WTC11 (cell line): ENCODE measurements at regions of chr12 and their contacts with region 1.

Region 1: DNA sequence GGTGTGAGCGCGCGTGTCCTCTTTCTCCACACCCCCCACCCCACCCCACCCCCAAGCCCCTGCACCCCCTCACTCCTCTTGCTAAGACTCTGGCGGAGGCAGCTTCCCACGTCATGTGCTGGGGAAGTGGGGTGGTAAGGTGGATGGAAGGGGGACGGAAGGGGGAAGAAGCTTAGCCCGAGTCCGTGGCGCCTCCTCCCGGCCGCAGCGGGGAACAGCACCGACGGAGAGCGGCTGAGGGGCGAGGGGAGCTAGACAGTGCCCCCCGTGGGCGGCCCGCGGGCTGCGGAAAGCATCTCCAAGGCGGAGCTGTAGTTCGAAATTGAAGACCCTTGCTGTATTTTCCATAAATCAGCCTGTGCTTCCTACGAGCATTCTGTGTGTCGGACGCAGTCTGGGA is 588 bp upstream of the GRIN2B start:
- DNase-seq: peak; percentile 92
- ATAC-seq: peak; percentile 84
- H3K4me3 Mint-ChIP-seq: peak overlapping the region; percentile 92
- H3K27ac Mint-ChIP-seq: no peak overlapping the region
- H3K4me1 Mint-ChIP-seq: peaks cover 17% of the 10 kb centered on the region
- H3K27me3 Mint-ChIP-seq: peaks cover 74% of the 10 kb centered on the region
- CTCF ChIP-seq: peak; percentile 88

Region 2: DNA sequence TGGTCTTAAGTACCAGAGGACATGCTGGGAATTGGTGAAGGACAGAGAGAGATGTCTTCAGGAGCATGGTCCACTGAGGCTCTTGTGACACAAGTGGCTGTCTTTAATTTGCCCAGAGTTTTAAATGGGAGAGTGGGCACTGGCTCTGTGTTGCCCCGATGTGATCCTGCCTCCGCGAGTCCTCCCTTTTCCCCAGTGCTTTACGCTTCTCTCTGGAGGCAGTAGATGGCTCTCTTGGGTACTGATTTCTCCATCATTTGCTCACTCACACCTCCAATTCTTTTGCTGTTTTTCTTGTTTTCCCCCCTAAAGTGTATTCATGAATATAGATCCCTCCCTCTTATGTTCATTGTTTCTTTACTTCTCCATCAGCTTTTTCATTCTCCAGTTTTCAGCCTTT is 711.2 kb before region 1 on chr12:
- CTCF ChIA-PET with region 1: interaction called, 10 read pairs
- POLR2A ChIA-PET with region 1: no interaction called
- DNase-seq: no peak
- ATAC-seq: peak; percentile 57
- H3K4me3 Mint-ChIP-seq: no peak overlapping the region
- H3K27ac Mint-ChIP-seq: no peak overlapping the region
- H3K4me1 Mint-ChIP-seq: peaks cover 22% of the 10 kb centered on the region
- H3K27me3 Mint-ChIP-seq: no peaks in the 10 kb centered on the region; the same call in none of the 2 replicates
- CTCF ChIP-seq: no peak

Region 3: GRCh38 chr12:13534645-13535398 is 447.2 kb before region 1 on chr12:
- CTCF ChIA-PET with region 1: interaction called, 15 read pairs
- POLR2A ChIA-PET with region 1: no interaction called
- DNase-seq: peak; percentile 97
- ATAC-seq: peak; percentile 89
- H3K4me3 Mint-ChIP-seq: peak overlapping the region; percentile 53
- H3K27ac Mint-ChIP-seq: peak overlapping the region; percentile 43
- H3K4me1 Mint-ChIP-seq: peaks cover 40% of the 10 kb centered on the region
- H3K27me3 Mint-ChIP-seq: peaks cover 5% of the 10 kb centered on the region
- CTCF ChIP-seq: peak; percentile 90

Region 4: DNA sequence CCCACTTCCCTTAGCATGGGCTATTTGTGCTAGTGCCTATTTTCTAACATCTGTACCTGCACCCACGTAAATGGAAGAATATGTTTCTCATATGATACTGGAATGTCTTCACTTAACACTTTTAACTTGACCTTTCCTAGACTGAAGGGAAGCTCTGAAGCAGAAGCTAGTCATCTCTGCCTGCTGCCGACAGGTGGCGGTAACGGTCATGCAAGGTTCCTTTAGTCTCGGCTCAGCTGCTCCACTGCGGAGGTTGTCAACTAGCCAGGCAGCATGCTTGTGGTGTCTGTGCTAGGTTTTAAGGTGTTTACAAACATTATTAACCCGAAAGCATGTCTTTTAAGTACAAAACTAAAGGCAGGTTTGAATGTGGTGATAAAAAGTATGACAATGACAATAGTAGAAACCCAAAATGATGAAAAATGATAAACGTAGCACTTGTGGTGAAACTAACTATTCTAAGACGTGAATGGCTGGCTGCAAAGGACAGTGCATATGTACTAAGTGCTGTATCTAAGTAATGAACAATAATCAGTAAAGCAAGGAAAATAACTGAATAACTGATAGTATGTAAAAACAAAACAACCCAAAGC is 117.8 kb before region 1 on chr12:
- CTCF ChIA-PET with region 1: interaction called, 32 read pairs
- POLR2A ChIA-PET with region 1: no interaction called
- DNase-seq: peak; percentile 79
- ATAC-seq: peak; percentile 97
- H3K4me3 Mint-ChIP-seq: no peak overlapping the region
- H3K27ac Mint-ChIP-seq: no peak overlapping the region
- H3K4me1 Mint-ChIP-seq: peaks cover 9% of the 10 kb centered on the region
- H3K27me3 Mint-ChIP-seq: no peaks in the 10 kb centered on the region; the same call in 1 of the 2 replicates
- CTCF ChIP-seq: peak; percentile 72

Region 5: DNA sequence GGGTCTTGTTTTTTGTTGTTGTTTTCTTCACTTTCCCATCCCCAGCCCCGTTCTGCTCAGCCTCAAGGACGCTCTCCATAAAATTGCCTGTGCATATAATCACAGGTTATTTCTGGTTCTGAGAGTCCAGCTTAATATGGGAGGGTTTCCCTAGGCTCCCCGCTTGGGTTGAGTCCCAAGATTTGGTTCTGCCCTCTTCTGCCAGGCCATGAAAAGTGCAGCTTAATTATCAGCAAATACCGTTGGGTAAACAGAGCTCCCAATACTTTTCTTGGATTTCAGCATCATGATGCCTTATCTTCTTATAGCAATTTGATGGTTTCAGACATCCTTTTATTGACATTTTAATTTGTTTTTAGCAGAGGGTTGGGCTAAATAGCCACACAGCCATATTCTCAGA is 76.2 kb before region 1 on chr12:
- CTCF ChIA-PET with region 1: interaction called, 10 read pairs
- POLR2A ChIA-PET with region 1: no interaction called
- DNase-seq: no peak
- ATAC-seq: peak; percentile 51; the same call in 1 of the 2 replicates
- H3K4me3 Mint-ChIP-seq: no peak overlapping the region
- H3K27ac Mint-ChIP-seq: no peak overlapping the region
- H3K4me1 Mint-ChIP-seq: no peaks in the 10 kb centered on the region
- H3K27me3 Mint-ChIP-seq: no peaks in the 10 kb centered on the region
- CTCF ChIP-seq: no peak

Region 6: GRCh38 chr12:13992106-13992505 is 10.1 kb after region 1 on chr12:
- CTCF ChIA-PET with region 1: interaction called, 20 read pairs
- POLR2A ChIA-PET with region 1: no interaction called
- DNase-seq: no peak
- ATAC-seq: no peak
- H3K4me3 Mint-ChIP-seq: no peak overlapping the region
- H3K27ac Mint-ChIP-seq: no peak overlapping the region
- H3K4me1 Mint-ChIP-seq: peaks cover 4% of the 10 kb centered on the region; the same call in 1 of the 2 replicates
- H3K27me3 Mint-ChIP-seq: no peaks in the 10 kb centered on the region
- CTCF ChIP-seq: no peak